ENCODE measurements at regions of chr14 and their contacts with region 1.

Region 1: DNA sequence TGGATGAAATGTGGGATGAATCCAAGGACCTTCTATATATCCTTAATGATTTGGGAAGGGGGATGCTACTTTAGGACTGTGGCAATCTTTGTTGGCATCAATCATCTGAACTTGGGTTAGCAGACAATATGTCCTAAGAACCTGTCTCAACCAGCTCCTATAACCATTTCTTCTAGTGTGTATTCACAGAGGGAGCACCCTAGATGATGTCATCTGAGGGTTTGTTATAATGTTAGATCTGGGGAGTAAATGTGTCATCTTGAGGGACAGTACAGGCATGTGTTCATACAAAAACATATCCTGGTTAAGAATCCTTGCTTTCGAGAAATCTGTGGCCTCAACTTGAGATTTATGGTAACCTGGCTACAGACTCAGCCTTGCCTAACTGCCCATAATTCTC is 41.9 kb upstream of the NFKBIA start:
- DNase-seq: no peak

Region 2: GRCh38 chr14:35519986-35520385 is 73.5 kb after region 1 on chr14:
- intact Hi-C with region 1: loop called (anchors 10 kb)
- DNase-seq: no peak

Measured in posterior cingulate gyrus (tissue), 11 donors.